Colonic mucosa (tissue), 4 donors: ENCODE measurements at regions of chr6 and their contacts with region 1.

Region 1: DNA sequence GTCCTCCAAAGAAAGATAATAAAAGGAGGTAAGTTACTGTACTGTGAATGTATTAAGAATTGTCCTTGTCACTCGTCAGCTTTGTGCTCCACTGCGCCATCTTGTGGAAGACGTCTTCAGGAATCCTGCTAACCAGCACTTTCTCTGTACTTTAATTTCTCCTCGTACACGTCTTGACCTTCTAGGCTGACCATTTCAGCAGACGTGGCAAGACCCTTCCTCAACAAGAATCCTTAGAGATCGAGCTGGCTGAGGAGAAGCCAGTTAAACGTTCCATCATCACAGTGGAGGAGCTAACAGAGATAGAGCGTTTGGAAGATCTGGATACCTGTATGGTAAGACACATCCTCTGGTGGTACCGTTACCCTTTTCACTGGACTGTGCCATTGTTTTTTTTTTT is 95.5 kb upstream of the SCGN start:
- DNase-seq: peak; percentile 87
- H3K4me3 ChIP-seq: no peak overlapping the region
- H3K27ac ChIP-seq: no peak overlapping the region
- H3K4me1 ChIP-seq: no peaks in the 10 kb centered on the region
- H3K27me3 ChIP-seq: no peaks in the 10 kb centered on the region
- CTCF ChIP-seq: peak; percentile 67

Region 2: GRCh38 chr6:25223490-25223991 is 333.0 kb before region 1 on chr6:
- intact Hi-C with region 1: loop called (anchors 5 kb)
- DNase-seq: peak; percentile 81
- H3K4me3 ChIP-seq: no peak overlapping the region
- H3K27ac ChIP-seq: no peak overlapping the region
- H3K4me1 ChIP-seq: no peaks in the 10 kb centered on the region
- H3K27me3 ChIP-seq: no peaks in the 10 kb centered on the region
- CTCF ChIP-seq: peak; percentile 87

Region 3: DNA sequence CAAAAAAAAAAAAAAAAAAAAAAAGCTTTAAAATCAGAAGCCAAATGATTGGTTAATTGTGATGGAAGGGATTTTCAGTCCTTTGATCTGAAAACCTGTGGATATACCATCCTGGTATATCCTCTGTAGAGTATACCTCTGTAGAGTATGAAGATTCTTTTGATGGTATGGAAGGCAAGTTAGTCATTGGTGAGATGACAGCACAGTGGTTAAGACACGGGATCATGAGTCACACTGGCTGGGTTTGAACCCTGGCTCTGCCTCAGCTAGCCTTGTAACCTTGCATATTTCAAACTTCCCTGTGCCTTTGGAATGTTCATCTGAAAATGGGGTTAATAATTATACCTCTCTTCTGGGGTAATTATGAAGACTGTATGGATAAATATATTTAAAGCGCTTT is 98.0 kb before region 1 on chr6:
- intact Hi-C with region 1: no loop called
- DNase-seq: no peak
- H3K4me3 ChIP-seq: no peak overlapping the region
- H3K27ac ChIP-seq: no peak overlapping the region
- H3K4me1 ChIP-seq: no peaks in the 10 kb centered on the region
- H3K27me3 ChIP-seq: no peaks in the 10 kb centered on the region
- CTCF ChIP-seq: no peak

Region 4: GRCh38 chr6:25519856-25520255 is 36.7 kb before region 1 on chr6:
- intact Hi-C with region 1: no loop called
- DNase-seq: no peak
- H3K4me3 ChIP-seq: no peak overlapping the region
- H3K27ac ChIP-seq: no peak overlapping the region
- H3K4me1 ChIP-seq: no peaks in the 10 kb centered on the region
- H3K27me3 ChIP-seq: no peaks in the 10 kb centered on the region
- CTCF ChIP-seq: no peak